ENCODE measurements at regions of chr14 and their contacts with region 1.

Region 1: DNA sequence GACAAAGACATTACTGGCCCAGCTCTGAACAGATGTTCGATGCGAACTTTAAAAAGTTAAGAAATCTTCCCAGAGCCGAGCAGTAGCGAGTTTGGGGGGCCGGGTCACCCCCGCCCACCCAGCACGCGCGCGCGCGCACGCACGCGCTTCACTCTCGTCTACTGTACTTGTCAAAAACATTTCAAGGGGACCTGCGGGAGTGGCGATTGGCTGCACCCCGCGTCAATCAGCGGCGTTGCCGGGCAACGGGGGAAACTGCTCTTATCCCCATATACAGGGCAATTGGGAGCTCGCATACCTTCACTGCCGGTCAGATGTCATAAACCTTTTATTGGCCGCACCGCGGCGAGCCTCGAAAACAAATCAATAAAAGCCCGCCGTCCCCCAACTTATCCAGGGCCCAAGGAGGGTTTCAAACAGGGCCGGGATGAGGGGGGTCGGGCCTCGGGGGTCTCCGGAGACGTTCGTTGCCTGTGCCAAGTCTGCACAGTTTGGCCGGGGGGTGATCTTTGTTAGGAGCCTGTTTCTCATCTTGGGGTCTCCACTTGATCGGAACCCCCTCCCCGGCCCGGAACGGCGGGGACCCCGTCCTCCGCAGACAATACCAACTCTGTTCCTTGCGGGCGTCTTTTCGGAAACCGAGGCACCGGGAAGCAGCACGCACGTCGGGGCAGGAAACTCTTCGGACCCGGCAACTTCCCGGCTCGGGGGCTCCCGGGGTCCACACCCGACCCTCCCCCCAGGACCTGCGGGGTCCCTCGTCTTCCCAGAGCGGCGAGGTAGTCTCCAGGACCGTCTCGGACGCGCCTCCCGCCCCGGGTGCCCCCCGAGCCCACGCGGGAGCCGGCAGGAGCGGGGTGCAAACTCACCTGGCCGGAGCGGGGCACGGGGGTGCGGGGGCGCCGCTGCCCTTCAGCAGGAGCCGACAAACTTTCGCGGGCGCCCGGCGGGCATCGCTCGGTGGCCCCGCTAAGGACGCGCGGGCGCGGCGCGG is 734 bp downstream of the FOXN3 start:
- DNase-seq: peak; percentile 94
- ATAC-seq: peak; percentile 85
- H3K4me3 ChIP-seq: peak overlapping the region; percentile 85
- H3K27ac ChIP-seq: peak overlapping the region; percentile 91
- H3K4me1 ChIP-seq: peaks cover 6% of the 10 kb centered on the region
- H3K27me3 ChIP-seq: no peaks in the 10 kb centered on the region
- CTCF ChIP-seq: no peak
- EP300 ChIP-seq: no peak
- POLR2A ChIP-seq: peak; percentile 31; the same call in 1 of the 2 replicates
- RAD21 ChIP-seq: no peak

Region 2: DNA sequence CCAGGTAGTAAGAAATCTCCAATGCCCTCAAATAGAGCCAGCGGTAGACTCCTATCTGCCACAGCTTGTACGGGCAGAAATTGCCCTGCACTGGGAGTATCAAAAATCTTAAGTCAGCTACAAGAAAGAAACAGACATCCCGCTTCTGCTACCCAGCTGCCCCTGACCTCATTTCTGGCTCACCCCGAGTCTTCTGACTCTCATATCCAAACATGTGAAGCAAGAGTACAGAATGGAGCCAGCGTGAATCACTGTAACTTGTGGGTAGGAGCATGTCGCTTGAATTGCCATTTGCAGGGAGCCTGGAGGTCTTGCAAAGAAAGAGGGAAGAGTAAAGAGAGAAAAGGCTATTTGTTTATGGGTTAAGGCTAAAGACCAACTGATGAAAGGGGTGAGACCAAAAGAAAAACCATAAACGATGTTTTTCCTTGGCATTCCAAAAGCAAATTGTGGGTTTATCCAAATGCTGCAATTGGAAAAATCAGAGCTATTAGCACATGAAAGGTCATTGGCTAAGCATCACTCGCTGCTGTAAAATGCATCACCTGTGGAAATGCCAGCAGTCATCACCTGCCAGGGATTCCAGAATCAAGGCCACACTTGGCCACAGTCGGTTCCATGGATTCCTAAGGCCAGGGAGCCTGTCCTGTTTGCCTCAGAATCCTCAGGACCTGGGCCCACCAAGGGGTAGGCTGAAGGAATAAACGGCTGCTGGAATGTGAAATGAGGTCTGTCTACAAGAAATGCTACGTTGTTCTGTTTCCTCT is 85.9 kb before region 1 on chr14:
- CTCF ChIA-PET with region 1: interaction called, 12 read pairs
- POLR2A ChIA-PET with region 1: interaction called, 7 read pairs
- RAD21 ChIA-PET with region 1: interaction called, 3 read pairs
- SMC1A ChIA-PET with region 1: interaction called, 7 read pairs
- in situ Hi-C with region 1: no loop called
- intact Hi-C with region 1: loop called (anchors 5 kb)
- DNase-seq: no peak
- ATAC-seq: peak; percentile 1; the same call in 1 of the 3 replicates
- H3K4me3 ChIP-seq: no peak overlapping the region; the same call in 1 of the 2 replicates
- H3K27ac ChIP-seq: peak overlapping the region; percentile 91
- H3K4me1 ChIP-seq: peaks cover 50% of the 10 kb centered on the region
- H3K27me3 ChIP-seq: no peaks in the 10 kb centered on the region
- CTCF ChIP-seq: no peak
- EP300 ChIP-seq: no peak
- POLR2A ChIP-seq: no peak
- RAD21 ChIP-seq: no peak

Region 3: DNA sequence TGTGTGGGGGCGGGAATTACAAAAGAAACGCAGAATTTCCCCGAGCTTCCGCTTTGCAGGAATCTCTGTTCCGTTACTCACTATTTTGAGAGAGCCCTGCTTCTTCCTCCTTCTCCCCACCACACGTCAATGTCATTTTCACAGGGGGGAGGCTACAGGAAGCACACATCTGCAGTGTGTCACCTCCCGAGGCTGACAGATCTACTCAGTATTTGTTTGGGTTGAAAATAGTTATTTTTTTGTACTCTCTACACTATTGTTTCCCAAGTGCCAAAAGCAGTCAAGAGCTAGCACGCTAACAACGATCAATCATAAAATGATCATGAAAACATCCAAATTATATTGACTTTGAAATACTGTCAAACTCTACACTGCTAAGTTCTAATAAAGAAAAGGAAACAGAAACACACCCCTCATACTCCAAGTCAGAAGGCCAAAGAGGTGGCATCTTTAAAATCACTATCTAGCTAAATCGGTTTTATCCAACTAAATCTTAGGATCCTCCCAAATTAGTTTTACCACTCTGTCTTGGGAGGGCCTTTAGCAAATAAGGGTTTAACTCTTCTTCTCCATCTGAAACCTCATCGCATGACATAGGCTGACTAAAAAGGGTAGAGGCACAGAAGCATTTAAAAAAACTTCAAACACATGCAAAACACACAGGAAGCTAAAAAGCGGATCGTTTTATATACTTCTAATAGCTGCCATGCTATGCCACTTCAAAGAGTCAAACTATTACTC is 51.1 kb before region 1 on chr14:
- CTCF ChIA-PET with region 1: no interaction called
- POLR2A ChIA-PET with region 1: interaction called, 6 read pairs
- RAD21 ChIA-PET with region 1: interaction called, 19 read pairs
- SMC1A ChIA-PET with region 1: interaction called, 19 read pairs
- in situ Hi-C with region 1: no loop called
- intact Hi-C with region 1: loop called (anchors 1 kb)
- DNase-seq: peak; percentile 81
- ATAC-seq: peak; percentile 96
- H3K4me3 ChIP-seq: peak overlapping the region; percentile 59
- H3K27ac ChIP-seq: peak overlapping the region; percentile 97
- H3K4me1 ChIP-seq: peaks cover 31% of the 10 kb centered on the region
- H3K27me3 ChIP-seq: no peaks in the 10 kb centered on the region
- CTCF ChIP-seq: no peak
- EP300 ChIP-seq: peak; percentile 82 to 90
- POLR2A ChIP-seq: peak; percentile 51; the same call in 1 of the 2 replicates
- RAD21 ChIP-seq: no peak; the same call in 1 of the 2 replicates

Region 4: DNA sequence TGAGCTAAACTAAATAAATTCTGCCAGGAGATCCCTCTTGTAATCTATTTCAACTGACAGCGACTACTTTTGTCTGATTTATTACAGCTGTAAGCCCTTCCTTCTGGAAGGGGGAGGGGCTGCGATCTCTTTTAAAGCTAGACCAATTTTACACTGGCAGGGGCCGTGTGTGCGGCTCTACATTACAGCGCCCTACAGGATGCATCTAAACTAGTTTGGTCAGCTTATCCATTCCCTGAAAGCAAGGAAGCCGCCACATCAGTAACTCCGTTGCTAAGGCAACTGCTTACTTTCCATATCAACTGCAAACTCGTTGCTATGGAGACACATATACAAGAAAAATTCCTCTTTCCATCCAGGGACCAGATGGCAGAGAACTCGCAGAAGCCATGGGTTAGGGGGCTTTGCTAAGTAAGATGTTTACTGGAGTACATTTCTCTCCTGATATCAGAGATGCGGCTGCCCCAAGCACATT is 16.7 kb before region 1 on chr14:
- CTCF ChIA-PET with region 1: no interaction called
- POLR2A ChIA-PET with region 1: interaction called, 4 read pairs
- RAD21 ChIA-PET with region 1: interaction called, 3 read pairs
- SMC1A ChIA-PET with region 1: interaction called, 16 read pairs
- in situ Hi-C with region 1: no loop called
- intact Hi-C with region 1: no loop called
- DNase-seq: no peak
- ATAC-seq: no peak
- H3K4me3 ChIP-seq: no peak overlapping the region
- H3K27ac ChIP-seq: no peak overlapping the region
- H3K4me1 ChIP-seq: no peaks in the 10 kb centered on the region
- H3K27me3 ChIP-seq: no peaks in the 10 kb centered on the region
- CTCF ChIP-seq: no peak
- EP300 ChIP-seq: no peak
- POLR2A ChIP-seq: no peak
- RAD21 ChIP-seq: no peak

Region 5: DNA sequence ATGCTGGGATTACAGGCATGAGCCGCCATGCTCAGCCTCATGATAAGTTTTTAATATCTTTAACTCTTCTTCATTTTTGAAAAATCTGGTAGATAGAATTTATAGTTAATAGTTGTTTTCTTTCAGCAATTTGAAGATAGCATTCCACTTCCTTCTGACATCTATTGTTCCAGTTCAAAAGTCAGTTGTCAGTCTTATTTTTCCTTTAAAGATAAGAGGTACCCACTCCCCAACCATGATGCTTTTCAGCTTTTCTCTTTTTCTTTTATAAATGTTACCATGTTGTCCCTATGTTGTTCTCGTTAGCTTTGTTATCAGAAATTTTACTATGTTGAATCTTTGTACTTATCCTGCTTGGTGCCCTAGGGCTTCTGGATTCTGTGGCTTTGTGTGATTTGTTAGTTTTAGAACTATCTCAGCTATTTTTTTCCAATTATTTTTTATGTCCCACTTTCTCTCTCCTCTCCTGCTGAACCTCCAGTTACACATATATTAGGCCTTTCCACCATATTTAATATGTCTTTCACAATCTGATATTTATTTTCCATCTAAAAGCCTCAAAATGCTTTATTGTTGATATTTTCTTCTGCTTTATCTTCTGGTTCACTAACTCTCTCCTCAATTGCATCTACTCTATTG is 182.4 kb after region 1 on chr14:
- CTCF ChIA-PET with region 1: no interaction called
- POLR2A ChIA-PET with region 1: no interaction called
- RAD21 ChIA-PET with region 1: no interaction called
- SMC1A ChIA-PET with region 1: no interaction called
- in situ Hi-C with region 1: no loop called
- intact Hi-C with region 1: no loop called
- DNase-seq: no peak
- ATAC-seq: no peak
- H3K4me3 ChIP-seq: no peak overlapping the region
- H3K27ac ChIP-seq: no peak overlapping the region
- H3K4me1 ChIP-seq: no peaks in the 10 kb centered on the region
- H3K27me3 ChIP-seq: no peaks in the 10 kb centered on the region
- CTCF ChIP-seq: no peak
- EP300 ChIP-seq: no peak
- POLR2A ChIP-seq: no peak
- RAD21 ChIP-seq: no peak

Region 6: GRCh38 chr14:89954070-89955028 is 538.0 kb after region 1 on chr14 and contains the start of gene EFCAB11:
- CTCF ChIA-PET with region 1: no interaction called
- POLR2A ChIA-PET with region 1: no interaction called
- RAD21 ChIA-PET with region 1: no interaction called
- SMC1A ChIA-PET with region 1: no interaction called
- in situ Hi-C with region 1: no loop called
- intact Hi-C with region 1: loop called (anchors 1 kb)
- DNase-seq: peak; percentile 93
- ATAC-seq: peak; percentile 92
- H3K4me3 ChIP-seq: peak within 1 kb of the TSS; percentile 65
- H3K27ac ChIP-seq: peak within 1 kb of the TSS; percentile 94
- H3K4me1 ChIP-seq: peaks cover 6% of the 10 kb centered on the region
- H3K27me3 ChIP-seq: no peaks in the 10 kb centered on the region
- CTCF ChIP-seq: peak; percentile 4 to 27 (median 5); a peak in 2 of 6 replicates
- EP300 ChIP-seq: no peak; a peak in 1 of 4 replicates
- POLR2A ChIP-seq: peak; percentile 84
- RAD21 ChIP-seq: no peak
- polyA plus RNA-seq, gene EFCAB11: 35.8 to 37.4 TPM

Measured in GM12878 (cell line).